ENCODE measurements at regions of chr5 and their contacts with region 1.

Region 1: DNA sequence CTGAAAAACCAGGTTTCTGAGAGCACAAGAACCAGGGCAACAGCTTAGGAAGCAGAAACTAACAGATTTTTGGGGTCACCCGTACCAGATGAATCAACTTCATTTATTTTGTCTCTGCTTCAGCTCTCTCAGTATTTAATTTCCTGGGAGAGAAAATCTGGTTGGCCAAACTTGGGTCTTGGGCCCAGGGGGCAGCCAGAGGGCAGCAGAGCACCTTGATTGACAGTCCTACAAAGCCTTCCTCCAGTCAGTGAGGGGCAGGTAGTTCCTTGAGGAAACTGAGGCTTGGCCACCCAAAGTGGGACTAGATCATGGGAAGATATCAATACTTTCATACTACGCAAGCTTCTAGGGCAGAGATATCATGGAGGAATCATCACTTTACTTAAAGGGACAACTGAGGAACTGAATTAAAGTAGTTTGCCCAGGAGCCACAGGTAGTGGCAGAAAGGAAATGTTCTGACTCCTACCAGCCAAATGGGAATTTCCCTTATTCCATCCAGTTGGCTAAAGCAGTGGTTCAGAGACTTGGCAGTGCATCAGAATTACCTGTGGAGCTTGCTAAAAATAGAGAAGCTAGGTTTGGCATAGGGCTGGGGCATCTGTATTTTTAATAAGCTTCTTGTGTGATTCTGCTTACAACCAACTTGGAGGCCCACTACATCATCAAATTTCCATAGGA is 21.5 kb upstream of the ARHGAP26 start:
- H3K4me3 ChIP-seq: no peak overlapping the region
- H3K27ac ChIP-seq: no peak overlapping the region
- H3K4me1 ChIP-seq: no peaks in the 10 kb centered on the region
- CTCF ChIP-seq: peak; percentile 63; the same call in 1 of the 2 replicates

Region 2: GRCh38 chr5:142737179-142737578 is 11.5 kb before region 1 on chr5:
- CTCF ChIA-PET with region 1: interaction called, 13 read pairs
- POLR2A ChIA-PET with region 1: no interaction called
- H3K4me3 ChIP-seq: no peak overlapping the region
- H3K27ac ChIP-seq: no peak overlapping the region
- H3K4me1 ChIP-seq: peaks cover 6% of the 10 kb centered on the region; the same call in 1 of the 2 replicates
- CTCF ChIP-seq: no peak

Region 3: DNA sequence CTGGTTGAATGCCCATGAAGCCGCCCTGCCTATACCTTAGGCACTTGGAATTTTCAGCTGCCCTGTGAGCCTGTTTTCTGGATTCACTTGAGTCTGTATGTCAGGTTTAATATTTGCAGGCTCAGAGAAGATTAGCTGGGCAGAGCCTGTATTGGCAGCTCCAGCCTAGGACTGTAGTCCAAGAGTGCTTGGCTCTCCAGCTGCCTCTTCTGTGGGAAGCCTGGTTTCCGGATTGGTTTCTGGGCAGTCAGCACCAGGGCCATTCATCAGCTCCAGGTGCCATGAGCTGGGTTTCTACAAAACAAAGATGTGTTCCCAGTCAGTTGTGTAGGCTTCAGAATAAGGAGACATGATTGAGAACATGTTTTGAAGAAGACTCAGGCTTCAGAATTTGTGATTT is 111.6 kb after region 1 on chr5:
- CTCF ChIA-PET with region 1: interaction called, 21 read pairs
- POLR2A ChIA-PET with region 1: no interaction called
- H3K4me3 ChIP-seq: no peak overlapping the region
- H3K27ac ChIP-seq: no peak overlapping the region
- H3K4me1 ChIP-seq: no peaks in the 10 kb centered on the region
- CTCF ChIP-seq: no peak

Region 4: GRCh38 chr5:142881076-142881783 is 132.5 kb after region 1 on chr5:
- CTCF ChIA-PET with region 1: interaction called, 243 read pairs
- POLR2A ChIA-PET with region 1: no interaction called
- H3K4me3 ChIP-seq: no peak overlapping the region
- H3K27ac ChIP-seq: no peak overlapping the region
- H3K4me1 ChIP-seq: no peaks in the 10 kb centered on the region
- CTCF ChIP-seq: no peak

Region 5: GRCh38 chr5:142915813-142916424 is 167.2 kb after region 1 on chr5:
- CTCF ChIA-PET with region 1: interaction called, 40 read pairs
- POLR2A ChIA-PET with region 1: no interaction called
- H3K4me3 ChIP-seq: no peak overlapping the region
- H3K27ac ChIP-seq: no peak overlapping the region
- H3K4me1 ChIP-seq: no peaks in the 10 kb centered on the region
- CTCF ChIP-seq: peak; percentile 57; the same call in 1 of the 2 replicates

Region 6: GRCh38 chr5:143041972-143042770 is 293.5 kb after region 1 on chr5:
- CTCF ChIA-PET with region 1: no interaction called
- POLR2A ChIA-PET with region 1: no interaction called
- H3K4me3 ChIP-seq: no peak overlapping the region
- H3K27ac ChIP-seq: peak overlapping the region; percentile 7; the same call in 1 of the 2 replicates
- H3K4me1 ChIP-seq: peaks cover 6% of the 10 kb centered on the region
- CTCF ChIP-seq: no peak

Measured in HEK293 (cell line).